ENCODE measurements at regions of chr7 and their contacts with region 1.

Region 1: DNA sequence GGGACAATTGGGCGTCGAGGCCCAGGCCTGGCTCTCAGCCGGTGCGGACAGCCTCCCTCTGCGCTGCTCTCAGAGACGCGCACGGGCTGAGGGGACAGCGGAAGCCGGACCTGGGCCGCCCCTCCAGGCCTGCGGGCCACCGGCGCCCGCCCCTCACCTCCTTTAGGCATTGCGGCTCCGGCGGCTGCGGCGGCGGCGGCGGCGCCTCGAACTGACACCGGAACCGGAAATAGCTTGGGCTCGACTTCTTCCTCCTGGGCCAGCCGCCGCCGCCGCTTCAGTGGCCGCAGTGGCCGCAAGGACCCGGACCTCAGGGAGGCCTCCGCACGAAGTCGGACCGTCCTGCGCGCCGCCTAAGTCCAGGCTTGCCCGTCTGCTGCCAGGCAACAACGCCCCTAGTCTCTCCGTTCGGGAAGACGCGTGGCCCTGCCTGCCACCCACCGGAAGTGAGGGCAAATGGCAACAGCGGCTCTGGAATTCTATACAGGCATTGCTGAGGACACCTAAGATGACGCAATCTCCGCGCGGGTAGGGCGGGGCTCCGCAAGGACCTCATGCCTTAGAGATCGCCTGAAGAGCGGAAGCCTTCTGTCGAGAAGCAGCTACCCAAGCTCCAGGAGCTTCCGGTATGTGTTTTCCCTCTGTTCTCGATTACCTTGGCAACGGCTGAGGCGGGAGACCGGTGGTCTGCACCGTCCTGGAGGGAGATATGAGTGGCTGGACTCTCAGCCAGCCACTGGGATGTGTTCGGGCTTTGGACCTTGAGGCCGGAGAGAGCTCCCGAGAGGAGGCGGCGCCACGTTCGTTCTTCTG is at the starts of genes BUD31 and PDAP1:
- DNase-seq: peak; percentile 94
- H3K4me3 ChIP-seq: peak within 1 kb of the TSS; percentile 94
- H3K4me3 Mint-ChIP-seq: peak within 1 kb of the TSS; percentile 91
- H3K27ac Mint-ChIP-seq: peak within 1 kb of the TSS; percentile 92
- H3K4me1 ChIP-seq: peaks cover 9% of the 10 kb centered on the region
- H3K4me1 Mint-ChIP-seq: peaks cover 22% of the 10 kb centered on the region
- H3K27me3 ChIP-seq: no peaks in the 10 kb centered on the region
- H3K27me3 Mint-ChIP-seq: no peaks in the 10 kb centered on the region
- CTCF ChIP-seq: no peak
- total RNA-seq, gene BUD31: 199 and 220 TPM in 2 replicates
- total RNA-seq, gene PDAP1: 180 and 191 TPM in 2 replicates

Region 2: GRCh38 chr7:99375070-99375807 is 33.3 kb before region 1 on chr7:
- CTCF ChIA-PET with region 1: interaction called, 5 read pairs
- POLR2A ChIA-PET with region 1: interaction called, 17 read pairs
- intact Hi-C with region 1: loop called (anchors 2 kb)
- DNase-seq: peak; percentile 75 to 79
- H3K4me3 ChIP-seq: peak overlapping the region; percentile 91
- H3K4me3 Mint-ChIP-seq: peak overlapping the region; percentile 77
- H3K27ac Mint-ChIP-seq: no peak overlapping the region
- H3K4me1 ChIP-seq: peaks cover 26% of the 10 kb centered on the region
- H3K4me1 Mint-ChIP-seq: peaks cover 15% of the 10 kb centered on the region
- H3K27me3 ChIP-seq: no peaks in the 10 kb centered on the region
- H3K27me3 Mint-ChIP-seq: no peaks in the 10 kb centered on the region
- CTCF ChIP-seq: no peak

Region 3: GRCh38 chr7:99419323-99420021 is 10.9 kb after region 1 on chr7:
- CTCF ChIA-PET with region 1: interaction called, 3 read pairs
- POLR2A ChIA-PET with region 1: interaction called, 13 read pairs
- intact Hi-C with region 1: no loop called
- DNase-seq: no peak
- H3K4me3 ChIP-seq: no peak overlapping the region
- H3K4me3 Mint-ChIP-seq: no peak overlapping the region
- H3K27ac Mint-ChIP-seq: peak overlapping the region; percentile 75
- H3K4me1 ChIP-seq: no peaks in the 10 kb centered on the region
- H3K4me1 Mint-ChIP-seq: peaks cover 9% of the 10 kb centered on the region
- H3K27me3 ChIP-seq: no peaks in the 10 kb centered on the region
- H3K27me3 Mint-ChIP-seq: no peaks in the 10 kb centered on the region
- CTCF ChIP-seq: no peak

Region 4: GRCh38 chr7:99433158-99433557 is 24.6 kb after region 1 on chr7:
- CTCF ChIA-PET with region 1: no interaction called
- POLR2A ChIA-PET with region 1: interaction called, 8 read pairs
- intact Hi-C with region 1: loop called (anchors 2 kb)
- DNase-seq: no peak
- H3K4me3 ChIP-seq: no peak overlapping the region
- H3K4me3 Mint-ChIP-seq: peak overlapping the region; percentile 67
- H3K27ac Mint-ChIP-seq: peak overlapping the region; percentile 92
- H3K4me1 ChIP-seq: peaks cover 72% of the 10 kb centered on the region
- H3K4me1 Mint-ChIP-seq: peaks cover 20% of the 10 kb centered on the region
- H3K27me3 ChIP-seq: no peaks in the 10 kb centered on the region
- H3K27me3 Mint-ChIP-seq: no peaks in the 10 kb centered on the region
- CTCF ChIP-seq: no peak